Endothelial cell of umbilical vein (primary cell): ENCODE measurements at regions of chr4 and their contacts with region 1.

Region 1: DNA sequence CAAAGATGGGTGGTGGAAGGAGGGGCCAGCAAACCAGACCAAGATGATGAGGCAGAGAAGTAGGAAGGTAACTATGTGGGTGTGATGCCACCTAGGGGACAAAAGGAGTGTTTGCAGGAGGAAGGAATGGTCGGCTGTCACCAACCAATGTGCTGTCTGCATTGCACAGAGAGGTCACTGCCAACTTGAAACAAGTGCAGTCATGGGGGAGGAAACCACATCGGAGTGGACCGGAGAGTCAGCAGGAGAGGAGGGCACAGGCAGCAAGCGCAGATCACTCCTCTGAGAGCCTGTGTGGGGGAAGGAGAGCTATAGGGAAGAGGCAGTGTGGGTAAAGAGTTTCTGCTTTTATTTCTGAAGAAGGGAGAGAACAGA is 38.5 kb upstream of the FGFBP2 start:
- DNase-seq: peak; percentile 73
- H3K4me3 ChIP-seq: no peak overlapping the region
- H3K27ac ChIP-seq: no peak overlapping the region
- H3K4me1 ChIP-seq: no peaks in the 10 kb centered on the region
- H3K27me3 ChIP-seq: peaks cover 6% of the 10 kb centered on the region in 2 experiments
- CTCF ChIP-seq: peak; percentile 78 to 85
- POLR2A ChIP-seq: no peak

Region 2: GRCh38 chr4:15729910-15730533 is 271.4 kb before region 1 on chr4:
- CTCF ChIA-PET with region 1: no interaction called
- POLR2A ChIA-PET with region 1: no interaction called
- dilution Hi-C with region 1: no loop called
- intact Hi-C with region 1: loop called (anchors 2 kb)
- DNase-seq: peak; percentile 41
- H3K4me3 ChIP-seq: no peak overlapping the region
- H3K27ac ChIP-seq: no peak overlapping the region
- H3K4me1 ChIP-seq: no peaks in the 10 kb centered on the region
- H3K27me3 ChIP-seq: no peaks in the 10 kb centered on the region
- CTCF ChIP-seq: peak; percentile 61 to 65
- POLR2A ChIP-seq: no peak

Region 3: DNA sequence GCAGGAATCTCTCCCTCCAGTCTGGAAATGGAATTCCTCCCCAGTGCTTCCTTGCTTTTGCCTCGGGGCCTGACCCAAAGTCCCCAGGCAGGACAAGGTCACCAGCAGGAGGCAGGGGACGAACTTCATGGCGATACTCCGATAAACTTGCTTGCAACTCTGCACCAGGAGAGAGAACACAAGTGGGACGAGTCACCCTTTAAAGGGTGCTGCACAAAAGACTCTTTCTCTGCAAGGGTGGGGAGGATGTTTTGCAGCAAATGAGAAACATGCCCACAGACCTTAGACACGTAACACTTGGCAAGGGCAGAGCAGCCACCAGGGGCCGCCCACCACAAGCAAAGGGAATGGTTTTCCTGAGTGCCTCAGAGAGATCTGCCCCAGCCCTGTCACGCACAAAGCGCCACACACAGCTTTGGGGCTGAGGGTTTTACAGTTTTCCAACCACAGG is 38.4 kb before region 1 on chr4 and contains the start of gene FGFBP2:
- CTCF ChIA-PET with region 1: interaction called, 13 read pairs
- POLR2A ChIA-PET with region 1: no interaction called
- dilution Hi-C with region 1: no loop called
- intact Hi-C with region 1: loop called (anchors 1 kb)
- DNase-seq: peak; percentile 34
- H3K4me3 ChIP-seq: no peak within 1 kb of the TSS
- H3K27ac ChIP-seq: no peak within 1 kb of the TSS
- H3K4me1 ChIP-seq: no peaks in the 10 kb centered on the region
- H3K27me3 ChIP-seq: no peaks in the 10 kb centered on the region
- CTCF ChIP-seq: peak; percentile 22 to 67
- POLR2A ChIP-seq: no peak
- total RNA-seq, gene FGFBP2: not detected in 2 replicates